WTC11 (cell line): ENCODE measurements at regions of chr1 and their contacts with region 1.

Region 1: GRCh38 chr1:46401964-46402626 is 8.0 kb downstream of the FAAH start:
- DNase-seq: peak; percentile 80
- ATAC-seq: peak; percentile 82
- H3K4me3 Mint-ChIP-seq: no peak overlapping the region
- H3K27ac Mint-ChIP-seq: no peak overlapping the region
- H3K4me1 Mint-ChIP-seq: peaks cover 39% of the 10 kb centered on the region
- H3K27me3 Mint-ChIP-seq: no peaks in the 10 kb centered on the region
- CTCF ChIP-seq: no peak

Region 2: GRCh38 chr1:46285730-46286477 is 116.2 kb before region 1 on chr1:
- CTCF ChIA-PET with region 1: no interaction called
- POLR2A ChIA-PET with region 1: no interaction called
- DNase-seq: peak; percentile 27
- ATAC-seq: peak; percentile 31
- H3K4me3 Mint-ChIP-seq: no peak overlapping the region
- H3K27ac Mint-ChIP-seq: no peak overlapping the region
- H3K4me1 Mint-ChIP-seq: no peaks in the 10 kb centered on the region
- H3K27me3 Mint-ChIP-seq: no peaks in the 10 kb centered on the region
- CTCF ChIP-seq: no peak

Region 3: GRCh38 chr1:46413596-46413985 is 11.5 kb after region 1 on chr1:
- CTCF ChIA-PET with region 1: interaction called, 12 read pairs
- POLR2A ChIA-PET with region 1: interaction called, 3 read pairs
- DNase-seq: peak; percentile 71
- ATAC-seq: peak; percentile 84
- H3K4me3 Mint-ChIP-seq: no peak overlapping the region
- H3K27ac Mint-ChIP-seq: no peak overlapping the region
- H3K4me1 Mint-ChIP-seq: 0 out of 2 replicates have a peak, but pooled peaks cover 2% of the 10 kb centered on the region
- H3K27me3 Mint-ChIP-seq: no peaks in the 10 kb centered on the region; the same call in 1 of the 2 replicates
- CTCF ChIP-seq: peak; percentile 55

Region 4: DNA sequence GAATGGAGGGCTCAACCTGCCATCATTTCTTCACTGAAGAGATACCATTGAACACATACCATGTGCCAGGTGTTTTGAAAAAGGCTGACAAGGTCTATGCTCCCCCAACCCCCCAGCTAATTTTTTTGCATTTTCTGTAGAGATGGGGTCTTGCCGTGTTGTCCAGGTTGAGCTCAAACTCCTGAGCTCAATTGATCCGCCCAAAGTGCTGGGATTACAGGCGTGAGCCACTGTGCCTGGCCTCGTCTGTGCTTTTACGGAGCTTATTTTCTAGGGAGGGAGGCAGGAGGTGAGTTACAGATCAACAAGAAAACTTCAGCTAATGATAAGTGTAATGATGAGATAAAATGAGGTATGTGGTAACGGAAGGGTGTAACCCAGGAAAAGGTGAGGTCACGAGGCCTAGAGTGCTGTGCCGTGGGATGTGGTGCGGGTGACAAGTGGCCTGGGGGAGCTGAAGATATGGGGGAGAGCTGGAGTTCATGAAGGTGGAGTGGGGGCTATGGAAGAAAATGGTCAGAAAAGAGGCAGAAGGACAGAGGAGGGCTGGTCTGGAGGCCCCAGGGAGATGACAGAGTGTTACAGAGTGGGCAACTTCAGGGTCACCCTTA is 20.3 kb after region 1 on chr1:
- CTCF ChIA-PET with region 1: interaction called, 12 read pairs
- POLR2A ChIA-PET with region 1: no interaction called
- DNase-seq: no peak
- ATAC-seq: no peak
- H3K4me3 Mint-ChIP-seq: no peak overlapping the region
- H3K27ac Mint-ChIP-seq: no peak overlapping the region
- H3K4me1 Mint-ChIP-seq: no peaks in the 10 kb centered on the region
- H3K27me3 Mint-ChIP-seq: peaks cover 10% of the 10 kb centered on the region; the same call in 1 of the 2 replicates
- CTCF ChIP-seq: no peak

Region 5: GRCh38 chr1:46431691-46432090 is 29.6 kb after region 1 on chr1:
- CTCF ChIA-PET with region 1: interaction called, 11 read pairs
- POLR2A ChIA-PET with region 1: no interaction called
- DNase-seq: no peak
- ATAC-seq: peak; percentile 32
- H3K4me3 Mint-ChIP-seq: no peak overlapping the region
- H3K27ac Mint-ChIP-seq: no peak overlapping the region
- H3K4me1 Mint-ChIP-seq: no peaks in the 10 kb centered on the region
- H3K27me3 Mint-ChIP-seq: peaks cover 15% of the 10 kb centered on the region
- CTCF ChIP-seq: no peak

Region 6: DNA sequence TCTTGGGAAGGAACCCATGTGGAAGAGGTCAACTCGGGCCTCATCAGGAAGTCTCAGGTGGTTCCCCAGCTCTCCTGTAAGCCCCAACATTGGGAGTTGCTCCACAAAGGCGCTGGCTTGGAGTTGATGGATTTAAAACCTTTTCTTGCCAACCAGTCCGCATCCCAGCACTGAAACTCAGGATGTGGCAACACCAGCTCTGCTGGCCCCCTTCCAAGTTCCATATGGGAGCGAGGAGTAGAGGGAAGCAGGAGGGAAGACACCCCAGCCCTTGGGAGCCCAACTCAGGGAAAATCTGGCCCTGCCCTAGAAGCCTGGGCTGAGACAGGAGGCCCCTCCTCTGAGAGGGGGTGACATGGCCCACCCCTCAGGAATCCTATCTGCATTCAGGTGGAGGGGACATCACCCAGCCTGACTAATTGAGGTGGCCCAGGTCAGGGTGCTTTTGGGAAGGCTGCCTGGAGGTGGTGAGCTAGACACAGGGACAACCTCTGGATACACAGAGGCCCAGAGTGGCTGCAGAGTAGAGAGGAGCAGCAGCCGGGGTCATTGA is 54.4 kb after region 1 on chr1:
- CTCF ChIA-PET with region 1: interaction called, 15 read pairs
- POLR2A ChIA-PET with region 1: no interaction called
- DNase-seq: no peak
- ATAC-seq: peak; percentile 40
- H3K4me3 Mint-ChIP-seq: no peak overlapping the region
- H3K27ac Mint-ChIP-seq: no peak overlapping the region
- H3K4me1 Mint-ChIP-seq: peaks cover 36% of the 10 kb centered on the region
- H3K27me3 Mint-ChIP-seq: peaks cover 63% of the 10 kb centered on the region
- CTCF ChIP-seq: no peak

Region 7: GRCh38 chr1:46516200-46516950 is 114.3 kb after region 1 on chr1:
- CTCF ChIA-PET with region 1: no interaction called
- POLR2A ChIA-PET with region 1: no interaction called
- DNase-seq: no peak
- ATAC-seq: no peak
- H3K4me3 Mint-ChIP-seq: peak overlapping the region; percentile 49
- H3K27ac Mint-ChIP-seq: peak overlapping the region; percentile 79
- H3K4me1 Mint-ChIP-seq: peaks cover 70% of the 10 kb centered on the region
- H3K27me3 Mint-ChIP-seq: peaks cover 49% of the 10 kb centered on the region
- CTCF ChIP-seq: no peak